ENCODE measurements at regions of chr3 and their contacts with region 1.

Region 1: DNA sequence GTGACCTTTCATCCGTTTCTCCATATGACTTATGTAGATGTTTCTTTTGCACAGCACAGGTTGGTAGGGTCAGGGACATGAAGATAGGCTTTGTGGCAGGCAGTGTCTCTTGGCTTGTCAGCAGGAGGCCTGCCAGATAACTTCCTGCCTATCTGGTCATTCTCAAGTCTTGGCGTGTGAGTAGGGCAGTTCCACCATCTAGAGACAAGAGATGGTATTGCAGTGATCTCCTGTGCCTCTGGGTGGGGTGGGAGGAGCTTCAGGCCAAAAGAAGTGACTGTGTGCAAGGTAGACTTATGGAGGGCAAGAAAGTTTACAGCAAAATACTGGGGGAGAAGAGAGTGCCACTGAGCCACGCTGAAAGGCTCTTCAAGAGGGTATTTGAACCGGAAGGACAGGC is 11.0 kb downstream of the TEX264 start:
- DNase-seq: peak; percentile 67 to 69
- H3K4me3 ChIP-seq: no peak overlapping the region
- H3K27ac ChIP-seq: no peak overlapping the region
- H3K4me1 ChIP-seq: no peaks in the 10 kb centered on the region
- H3K27me3 ChIP-seq: no peaks in the 10 kb centered on the region
- CTCF ChIP-seq: peak; percentile 85

Region 2: GRCh38 chr3:51391075-51391567 is 291.0 kb before region 1 on chr3 and contains the start of gene RBM15B:
- CTCF ChIA-PET with region 1: no interaction called
- POLR2A ChIA-PET with region 1: no interaction called
- intact Hi-C with region 1: loop called (anchors 1 kb)
- DNase-seq: peak; percentile 79 to 97
- H3K4me3 ChIP-seq: peak within 1 kb of the TSS; percentile 68
- H3K27ac ChIP-seq: peak within 1 kb of the TSS; percentile 41
- H3K4me1 ChIP-seq: peaks cover 50% of the 10 kb centered on the region
- H3K27me3 ChIP-seq: no peaks in the 10 kb centered on the region
- CTCF ChIP-seq: no peak; the same call in 1 of the 2 replicates
- total RNA-seq, gene RBM15B: 29.1 and 29.4 TPM in 2 replicates

Region 3: GRCh38 chr3:51511000-51511399 is 171.1 kb before region 1 on chr3:
- CTCF ChIA-PET with region 1: interaction called, 14 read pairs
- POLR2A ChIA-PET with region 1: no interaction called
- intact Hi-C with region 1: no loop called
- DNase-seq: peak in 1 of 2 experiments; percentile 67
- H3K4me3 ChIP-seq: no peak overlapping the region
- H3K27ac ChIP-seq: no peak overlapping the region
- H3K4me1 ChIP-seq: no peaks in the 10 kb centered on the region
- H3K27me3 ChIP-seq: no peaks in the 10 kb centered on the region
- CTCF ChIP-seq: no peak

Region 4: GRCh38 chr3:51637941-51638471 is 44.1 kb before region 1 on chr3:
- CTCF ChIA-PET with region 1: interaction called, 4 read pairs
- POLR2A ChIA-PET with region 1: no interaction called
- intact Hi-C with region 1: loop called (anchors 5 kb)
- DNase-seq: peak; percentile 33 to 59
- H3K4me3 ChIP-seq: no peak overlapping the region
- H3K27ac ChIP-seq: no peak overlapping the region
- H3K4me1 ChIP-seq: peaks cover 16% of the 10 kb centered on the region
- H3K27me3 ChIP-seq: no peaks in the 10 kb centered on the region
- CTCF ChIP-seq: peak; percentile 79

Region 5: DNA sequence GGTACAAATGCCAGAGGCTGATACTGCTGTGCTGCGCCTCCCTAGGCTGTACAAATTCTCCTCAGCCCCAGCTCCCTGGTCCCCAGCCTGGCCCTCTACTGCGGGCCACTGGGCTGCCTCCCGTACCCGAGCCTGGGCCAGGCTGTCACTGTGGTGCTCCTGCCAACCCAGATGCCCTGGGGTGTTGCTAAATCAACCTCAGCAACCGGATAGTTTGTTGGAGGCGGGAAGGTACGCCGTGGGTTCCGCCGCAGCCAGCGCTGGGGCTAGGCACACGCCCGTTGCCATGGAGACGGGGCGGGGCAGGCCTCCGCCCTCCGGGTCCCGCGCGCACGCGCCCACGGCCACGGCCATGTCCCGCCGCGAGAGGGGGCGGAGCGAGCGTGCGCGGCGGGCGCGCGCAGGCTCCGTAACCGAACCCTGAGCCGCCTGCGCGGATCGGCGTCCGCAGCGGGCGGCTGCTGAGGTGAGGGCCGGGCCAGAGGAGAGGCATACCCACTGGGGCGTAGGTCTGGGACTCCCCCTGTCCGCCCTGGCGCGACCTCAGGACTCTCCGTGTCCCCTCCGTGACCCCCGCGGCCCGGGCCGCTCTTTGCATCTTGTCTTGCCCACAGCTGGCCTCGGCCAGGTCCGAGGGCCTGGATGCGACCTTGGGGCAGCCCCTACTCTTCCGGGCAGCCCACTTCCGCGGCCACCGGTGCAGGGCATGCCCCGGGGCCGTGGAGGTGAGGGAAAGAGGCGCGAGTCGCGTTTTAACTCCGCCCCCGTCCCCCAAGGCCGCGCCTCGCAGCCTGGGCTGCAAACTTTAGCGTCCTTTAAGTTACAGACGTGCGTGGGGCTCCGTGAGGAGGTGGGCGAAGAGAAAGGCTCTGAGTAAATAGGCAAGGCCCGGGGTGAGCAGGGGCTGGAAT is 11.0 kb before region 1 on chr3 and contains the start of gene TEX264:
- CTCF ChIA-PET with region 1: interaction called, 6 read pairs
- POLR2A ChIA-PET with region 1: interaction called, 14 read pairs
- intact Hi-C with region 1: no loop called
- DNase-seq: peak; percentile 61 to 93
- H3K4me3 ChIP-seq: peak within 1 kb of the TSS; percentile 82
- H3K27ac ChIP-seq: peak within 1 kb of the TSS; percentile 47; the same call in 1 of the 2 replicates
- H3K4me1 ChIP-seq: peaks cover 18% of the 10 kb centered on the region
- H3K27me3 ChIP-seq: no peaks in the 10 kb centered on the region
- CTCF ChIP-seq: no peak
- total RNA-seq, gene TEX264: 44.3 and 53.0 TPM in 2 replicates

Region 6: DNA sequence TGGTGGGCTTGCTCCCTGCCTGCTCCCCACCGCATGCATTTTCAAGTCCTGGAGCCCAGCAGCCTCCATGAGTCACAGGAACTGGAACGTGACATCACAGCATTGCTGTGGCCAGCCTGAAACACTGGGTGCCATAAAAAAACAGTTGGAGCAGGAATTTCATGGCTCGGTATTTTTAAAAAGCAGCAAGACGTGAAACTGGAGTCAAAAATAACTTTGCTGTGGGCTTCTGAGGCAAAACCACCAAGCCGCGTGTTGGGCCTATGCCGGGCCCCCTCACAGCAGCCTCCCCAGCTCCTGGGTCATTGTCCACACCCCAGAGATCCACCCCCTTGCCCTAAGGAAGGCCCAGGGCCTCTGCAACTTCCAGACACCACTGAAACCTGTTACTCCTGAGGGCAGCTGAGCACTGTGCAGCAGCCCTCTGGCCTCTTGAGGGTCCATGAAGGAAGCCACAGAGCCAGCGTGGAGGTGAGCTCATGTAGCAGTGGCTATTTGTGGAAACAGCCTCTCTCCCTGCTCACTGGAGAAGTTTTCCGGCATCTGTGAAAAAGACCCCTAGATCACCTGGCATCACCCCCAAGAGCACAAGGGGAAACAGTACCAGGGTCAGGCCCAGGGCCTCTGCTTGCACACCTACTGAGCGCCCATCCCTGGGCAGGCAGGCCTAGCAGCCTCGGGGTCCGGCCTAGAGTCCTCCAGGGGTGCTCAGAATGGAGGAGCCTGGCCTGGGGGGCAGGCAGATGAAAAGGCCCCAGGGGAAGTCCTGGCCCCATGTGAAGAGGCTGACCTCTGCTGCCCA is 408.3 kb after region 1 on chr3:
- CTCF ChIA-PET with region 1: no interaction called
- POLR2A ChIA-PET with region 1: no interaction called
- intact Hi-C with region 1: no loop called
- DNase-seq: peak in 1 of 2 experiments; percentile 52
- H3K4me3 ChIP-seq: no peak overlapping the region
- H3K27ac ChIP-seq: no peak overlapping the region
- H3K4me1 ChIP-seq: no peaks in the 10 kb centered on the region
- H3K27me3 ChIP-seq: no peaks in the 10 kb centered on the region
- CTCF ChIP-seq: no peak